BJ (cell line): ENCODE measurements at regions of chr10 and their contacts with region 1.

Region 1: DNA sequence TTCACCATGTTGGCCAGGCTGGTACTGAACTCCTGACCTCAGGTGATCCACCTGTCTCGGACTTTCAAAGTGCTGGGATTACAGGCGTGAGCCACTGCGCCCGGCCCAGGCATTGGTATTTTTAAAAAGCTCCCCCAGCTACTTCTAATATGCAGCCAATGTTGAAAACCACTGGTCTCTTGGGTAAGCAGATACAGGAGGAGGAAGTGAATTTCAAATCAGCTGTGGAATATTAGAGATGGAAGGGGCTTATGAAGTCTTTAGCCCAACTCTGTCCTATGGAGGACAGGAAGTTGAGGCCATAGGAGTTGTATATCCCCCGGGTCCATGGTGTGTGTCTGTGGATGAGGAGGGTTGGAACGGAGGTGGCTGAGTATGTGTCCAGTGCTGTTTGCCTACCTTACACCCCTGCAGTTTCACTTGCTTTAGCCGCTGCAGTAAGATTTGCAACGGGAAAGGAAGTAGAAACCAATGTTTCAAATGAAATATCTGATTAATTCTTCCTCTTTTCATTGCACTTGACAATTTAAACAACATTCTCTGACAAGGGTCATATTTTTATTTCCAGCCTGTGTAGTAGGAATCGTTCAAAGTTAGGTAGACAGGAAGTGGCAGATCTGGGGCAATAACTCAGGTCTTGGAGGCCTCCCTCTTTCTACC is 3.4 kb downstream of the PDE6C start:
- DNase-seq: no peak
- H3K4me3 ChIP-seq: no peak overlapping the region
- H3K27me3 ChIP-seq: peaks cover 9% of the 10 kb centered on the region
- CTCF ChIP-seq: no peak

Region 2: GRCh38 chr10:91700788-91701444 is 1914.8 kb before region 1 on chr10:
- CTCF ChIA-PET with region 1: no interaction called
- POLR2A ChIA-PET with region 1: no interaction called
- DNase-seq: no peak
- H3K4me3 ChIP-seq: no peak overlapping the region
- H3K27me3 ChIP-seq: peaks cover 4% of the 10 kb centered on the region; the same call in 1 of the 2 replicates
- CTCF ChIP-seq: no peak

Region 3: GRCh38 chr10:93062514-93063143 is 553.1 kb before region 1 on chr10:
- CTCF ChIA-PET with region 1: no interaction called
- POLR2A ChIA-PET with region 1: interaction called, 11 read pairs
- DNase-seq: no peak
- H3K4me3 ChIP-seq: peak overlapping the region; percentile 32
- H3K27me3 ChIP-seq: peaks cover 53% of the 10 kb centered on the region
- CTCF ChIP-seq: peak; percentile 48